ENCODE measurements at regions of chr11 and their contacts with region 1.

Region 1: DNA sequence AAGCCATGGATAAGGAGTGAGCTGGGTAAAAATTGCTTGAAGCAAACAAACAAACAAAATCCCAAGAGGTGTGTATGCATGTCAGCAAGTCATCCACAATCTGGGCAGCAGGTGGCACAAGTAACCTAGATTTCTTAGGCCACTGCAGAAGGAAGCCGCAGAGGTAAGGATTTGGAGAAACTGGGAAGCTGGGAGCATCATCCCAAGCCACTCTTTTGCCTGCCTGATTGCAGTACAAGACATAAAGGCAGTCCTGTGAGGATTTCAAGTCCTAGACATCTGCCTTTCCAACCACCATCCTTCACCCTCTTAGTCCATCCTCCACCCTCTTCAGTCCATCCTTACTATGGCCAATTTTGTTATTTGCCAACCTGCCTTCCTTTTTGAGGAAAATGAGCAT is 67.2 kb upstream of the BMAL1 start:
- DNase-seq: peak; percentile 76 to 78
- H3K4me3 ChIP-seq: no peak overlapping the region
- H3K4me3 Mint-ChIP-seq: no peak overlapping the region
- H3K27ac Mint-ChIP-seq: no peak overlapping the region
- H3K4me1 ChIP-seq: peaks cover 12% of the 10 kb centered on the region
- H3K4me1 Mint-ChIP-seq: peaks cover 19% of the 10 kb centered on the region
- H3K27me3 ChIP-seq: no peaks in the 10 kb centered on the region
- H3K27me3 Mint-ChIP-seq: no peaks in the 10 kb centered on the region
- CTCF ChIP-seq: peak; percentile 75 to 83

Region 2: GRCh38 chr11:13000721-13001120 is 209.7 kb before region 1 on chr11:
- CTCF ChIA-PET with region 1: no interaction called
- POLR2A ChIA-PET with region 1: no interaction called
- intact Hi-C with region 1: no loop called
- DNase-seq: no peak
- H3K4me3 ChIP-seq: no peak overlapping the region
- H3K4me3 Mint-ChIP-seq: no peak overlapping the region
- H3K27ac Mint-ChIP-seq: no peak overlapping the region
- H3K4me1 ChIP-seq: 0 out of 2 replicates have a peak, but pooled peaks cover 6% of the 10 kb centered on the region
- H3K4me1 Mint-ChIP-seq: no peaks in the 10 kb centered on the region
- H3K27me3 ChIP-seq: no peaks in the 10 kb centered on the region
- H3K27me3 Mint-ChIP-seq: peaks cover 7% of the 10 kb centered on the region
- CTCF ChIP-seq: no peak

Region 3: DNA sequence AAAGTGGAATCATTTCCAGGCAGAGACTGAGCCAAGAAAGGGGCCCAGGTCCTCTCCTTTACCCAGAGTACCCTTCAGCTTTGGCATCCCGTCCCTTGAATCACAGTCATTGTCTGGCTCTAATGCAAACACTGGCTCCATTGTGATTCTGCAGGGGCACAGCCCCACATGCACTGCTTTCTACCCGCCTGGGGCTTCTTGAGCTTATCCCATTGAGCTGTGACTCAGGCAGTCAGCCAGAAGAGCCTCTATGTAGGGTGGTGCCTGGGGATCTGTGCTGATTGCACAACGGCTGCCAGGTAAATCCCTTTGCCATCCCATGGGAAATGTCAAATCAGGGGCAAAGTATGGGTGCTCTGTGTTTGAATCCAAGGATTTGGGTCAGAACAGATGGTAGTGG is 112.4 kb before region 1 on chr11:
- CTCF ChIA-PET with region 1: no interaction called
- POLR2A ChIA-PET with region 1: no interaction called
- intact Hi-C with region 1: no loop called
- DNase-seq: no peak
- H3K4me3 ChIP-seq: no peak overlapping the region
- H3K4me3 Mint-ChIP-seq: no peak overlapping the region
- H3K27ac Mint-ChIP-seq: no peak overlapping the region
- H3K4me1 ChIP-seq: peaks cover 7% of the 10 kb centered on the region; the same call in 1 of the 2 replicates
- H3K4me1 Mint-ChIP-seq: no peaks in the 10 kb centered on the region
- H3K27me3 ChIP-seq: no peaks in the 10 kb centered on the region
- H3K27me3 Mint-ChIP-seq: no peaks in the 10 kb centered on the region
- CTCF ChIP-seq: no peak

Region 4: GRCh38 chr11:13183094-13183825 is 27.2 kb before region 1 on chr11:
- CTCF ChIA-PET with region 1: no interaction called
- POLR2A ChIA-PET with region 1: no interaction called
- intact Hi-C with region 1: loop called (anchors 1 kb)
- DNase-seq: peak in 1 of 2 experiments; percentile 22
- H3K4me3 ChIP-seq: no peak overlapping the region
- H3K4me3 Mint-ChIP-seq: peak overlapping the region; percentile 10
- H3K27ac Mint-ChIP-seq: no peak overlapping the region
- H3K4me1 ChIP-seq: peaks cover 6% of the 10 kb centered on the region
- H3K4me1 Mint-ChIP-seq: no peaks in the 10 kb centered on the region
- H3K27me3 ChIP-seq: no peaks in the 10 kb centered on the region
- H3K27me3 Mint-ChIP-seq: peaks cover 2% of the 10 kb centered on the region
- CTCF ChIP-seq: peak; percentile 41 to 53

Region 5: DNA sequence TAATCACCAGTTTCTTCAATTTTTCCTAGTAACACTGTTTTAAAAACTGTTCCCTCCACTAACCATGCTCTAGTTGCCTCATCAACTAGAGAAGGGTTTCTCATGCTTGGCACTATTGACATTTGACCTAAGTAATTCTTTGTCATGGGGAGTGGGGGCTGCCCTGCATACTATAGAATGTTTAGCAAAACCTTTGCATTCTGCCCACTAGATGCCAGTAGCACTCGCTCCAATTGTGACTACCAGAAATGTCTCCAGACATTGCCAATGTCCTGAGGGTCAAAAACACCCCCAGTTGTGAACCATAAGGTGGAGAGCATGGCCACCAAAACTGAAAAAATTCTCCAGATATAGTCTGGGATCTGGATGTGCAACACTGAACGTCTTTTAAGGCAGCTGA is 39.6 kb after region 1 on chr11:
- CTCF ChIA-PET with region 1: interaction called, 4 read pairs
- POLR2A ChIA-PET with region 1: no interaction called
- intact Hi-C with region 1: loop called (anchors 5 kb)
- DNase-seq: peak in 1 of 2 experiments; percentile 17
- H3K4me3 ChIP-seq: no peak overlapping the region
- H3K4me3 Mint-ChIP-seq: no peak overlapping the region
- H3K27ac Mint-ChIP-seq: no peak overlapping the region
- H3K4me1 ChIP-seq: no peaks in the 10 kb centered on the region
- H3K4me1 Mint-ChIP-seq: no peaks in the 10 kb centered on the region
- H3K27me3 ChIP-seq: no peaks in the 10 kb centered on the region
- H3K27me3 Mint-ChIP-seq: peaks cover 9% of the 10 kb centered on the region
- CTCF ChIP-seq: no peak

Region 6: GRCh38 chr11:13335319-13335718 is 124.9 kb after region 1 on chr11:
- CTCF ChIA-PET with region 1: interaction called, 19 read pairs
- POLR2A ChIA-PET with region 1: no interaction called
- intact Hi-C with region 1: loop called (anchors 1 kb)
- DNase-seq: peak; percentile 64 to 74
- H3K4me3 ChIP-seq: no peak overlapping the region
- H3K4me3 Mint-ChIP-seq: no peak overlapping the region
- H3K27ac Mint-ChIP-seq: no peak overlapping the region
- H3K4me1 ChIP-seq: peaks cover 25% of the 10 kb centered on the region
- H3K4me1 Mint-ChIP-seq: peaks cover 25% of the 10 kb centered on the region
- H3K27me3 ChIP-seq: no peaks in the 10 kb centered on the region
- H3K27me3 Mint-ChIP-seq: no peaks in the 10 kb centered on the region
- CTCF ChIP-seq: peak; percentile 74 to 78

Region 7: GRCh38 chr11:13384908-13385640 is 174.7 kb after region 1 on chr11:
- CTCF ChIA-PET with region 1: interaction called, 6 read pairs
- POLR2A ChIA-PET with region 1: no interaction called
- intact Hi-C with region 1: loop called (anchors 1 kb)
- DNase-seq: peak in 1 of 2 experiments; percentile 53
- H3K4me3 ChIP-seq: no peak overlapping the region
- H3K4me3 Mint-ChIP-seq: no peak overlapping the region
- H3K27ac Mint-ChIP-seq: no peak overlapping the region
- H3K4me1 ChIP-seq: no peaks in the 10 kb centered on the region
- H3K4me1 Mint-ChIP-seq: no peaks in the 10 kb centered on the region
- H3K27me3 ChIP-seq: no peaks in the 10 kb centered on the region
- H3K27me3 Mint-ChIP-seq: no peaks in the 10 kb centered on the region
- CTCF ChIP-seq: peak; percentile 70 to 72

Region 8: DNA sequence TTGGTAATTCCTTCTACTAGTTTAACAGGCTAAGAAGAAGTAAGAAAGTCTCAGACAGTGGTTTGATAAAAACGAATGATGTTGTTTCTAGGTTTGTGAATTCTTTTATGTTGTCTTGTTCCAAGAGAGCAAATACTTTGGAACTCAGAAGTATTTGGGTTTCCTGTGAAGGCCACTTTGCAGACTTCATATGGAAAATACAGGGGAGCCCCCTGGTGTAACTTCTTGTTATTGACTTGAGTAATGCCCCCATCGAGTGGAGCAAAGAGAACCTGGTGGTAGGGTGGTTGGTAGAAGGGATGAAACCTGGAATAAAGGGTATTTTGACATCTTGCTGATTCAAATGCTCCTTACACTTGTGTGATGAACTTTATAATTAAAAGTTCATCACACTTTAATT is 325.4 kb after region 1 on chr11:
- CTCF ChIA-PET with region 1: no interaction called
- POLR2A ChIA-PET with region 1: no interaction called
- intact Hi-C with region 1: loop called (anchors 5 kb)
- DNase-seq: peak in 1 of 2 experiments; percentile 50
- H3K4me3 ChIP-seq: no peak overlapping the region
- H3K4me3 Mint-ChIP-seq: no peak overlapping the region
- H3K27ac Mint-ChIP-seq: no peak overlapping the region
- H3K4me1 ChIP-seq: no peaks in the 10 kb centered on the region
- H3K4me1 Mint-ChIP-seq: no peaks in the 10 kb centered on the region
- H3K27me3 ChIP-seq: no peaks in the 10 kb centered on the region
- H3K27me3 Mint-ChIP-seq: peaks cover 4% of the 10 kb centered on the region
- CTCF ChIP-seq: peak; percentile 39 to 51

Measured in Caco-2 (cell line).